ENCODE measurements at regions of chr7 and their contacts with region 1.

Region 1: GRCh38 chr7:123534383-123535260 is at the start of gene IQUB:
- DNase-seq: peak; percentile 99 to 100
- ATAC-seq: peak; percentile 99
- H3K4me3 ChIP-seq: peak within 1 kb of the TSS; percentile 47 to 67
- H3K27ac ChIP-seq: peak within 1 kb of the TSS in 1 of 2 donors; percentile 49
- H3K4me1 ChIP-seq: no peaks in the 10 kb centered on the region
- H3K27me3 ChIP-seq: no peaks in the 10 kb centered on the region
- total RNA-seq, gene IQUB: 0.39 to 0.81 TPM

Region 2: DNA sequence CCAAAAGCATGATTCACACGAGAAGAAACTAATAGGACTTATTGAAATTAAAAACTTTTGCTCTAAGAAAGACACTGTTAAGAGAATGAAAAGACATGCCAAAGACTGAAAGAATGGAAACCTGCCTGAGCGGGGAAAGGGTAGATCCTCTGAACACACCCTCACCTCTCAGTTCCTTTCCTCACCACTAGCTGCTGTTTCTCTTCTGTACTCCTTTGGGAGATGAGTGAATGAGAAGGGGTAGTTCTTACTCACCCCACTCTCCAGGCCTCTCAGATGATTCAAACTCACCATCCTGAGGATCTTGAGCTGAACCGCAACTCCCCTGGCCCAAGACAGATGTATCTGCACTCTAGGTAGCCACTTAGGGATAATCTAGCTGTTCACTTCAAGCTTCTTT is 42.1 kb before region 1 on chr7:
- intact Hi-C with region 1: loop called in 1 of 2 experiments (anchors 2 kb)
- DNase-seq: no peak
- ATAC-seq: no peak
- H3K4me3 ChIP-seq: no peak overlapping the region
- H3K27ac ChIP-seq: no peak overlapping the region
- H3K4me1 ChIP-seq: no peaks in the 10 kb centered on the region
- H3K27me3 ChIP-seq: no peaks in the 10 kb centered on the region

Region 3: DNA sequence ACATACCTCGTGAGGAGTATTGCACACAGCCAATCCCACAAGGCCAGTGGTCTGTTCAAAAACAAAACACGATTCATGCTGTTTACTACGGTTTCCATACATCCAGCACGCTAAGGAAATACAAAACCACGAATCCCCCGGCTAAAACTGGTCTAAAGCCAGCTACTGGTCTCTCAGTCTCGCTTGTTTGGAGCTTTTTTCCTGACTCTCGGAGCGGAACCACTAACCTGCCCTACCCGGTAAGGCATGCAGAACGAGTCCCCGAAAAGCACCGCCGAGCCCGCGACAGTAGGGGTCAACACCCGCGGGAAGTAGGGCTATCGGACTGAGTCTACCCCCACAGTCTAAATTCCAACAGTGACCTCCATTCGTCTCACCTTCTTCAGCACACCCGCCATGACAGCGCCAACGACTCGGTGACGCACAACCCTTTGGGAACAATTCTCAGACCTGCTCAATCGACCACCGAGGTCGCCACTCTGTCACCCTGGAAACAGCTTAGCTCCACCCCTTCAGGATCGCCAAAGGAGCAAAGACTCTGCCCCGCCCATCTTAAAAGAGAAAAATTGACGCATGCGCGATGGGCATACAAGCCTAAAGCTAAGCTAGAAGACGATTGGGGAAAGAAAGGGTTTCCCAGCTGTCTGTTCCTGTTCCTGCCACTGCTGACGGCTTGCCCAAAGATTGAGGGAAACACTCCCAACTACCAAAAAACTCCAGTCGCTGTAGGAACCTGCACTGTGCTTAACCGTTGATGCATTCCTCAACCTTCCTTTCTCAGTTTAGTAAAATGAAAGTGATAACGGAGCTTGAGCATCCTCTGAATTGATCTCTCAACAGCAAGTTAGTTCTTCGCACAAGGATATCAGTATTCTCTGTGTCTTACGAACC is 23.0 kb after region 1 on chr7 and contains the start of gene NDUFA5:
- intact Hi-C with region 1: loop called in 1 of 2 experiments (anchors 2 kb)
- DNase-seq: peak; percentile 96 to 98
- ATAC-seq: peak; percentile 100
- H3K4me3 ChIP-seq: peak within 1 kb of the TSS; percentile 93 to 99
- H3K27ac ChIP-seq: peak within 1 kb of the TSS; percentile 85 to 94
- H3K4me1 ChIP-seq: peaks cover 0 to 2% of the 10 kb centered on the region in 2 donors
- H3K27me3 ChIP-seq: no peaks in the 10 kb centered on the region
- total RNA-seq, gene NDUFA5: 51.1 to 53.6 TPM

Region 4: GRCh38 chr7:124718032-124718766 is 1183.6 kb after region 1 on chr7:
- intact Hi-C with region 1: loop called in 1 of 2 experiments (anchors 10 kb)
- DNase-seq: no peak
- ATAC-seq: no peak
- H3K4me3 ChIP-seq: no peak overlapping the region
- H3K27ac ChIP-seq: no peak overlapping the region
- H3K4me1 ChIP-seq: no peaks in the 10 kb centered on the region
- H3K27me3 ChIP-seq: no peaks in the 10 kb centered on the region

Measured in aorta (tissue), 5 donors.